B cell (primary cell): ENCODE measurements at regions of chr11 and their contacts with region 1.

Region 1: DNA sequence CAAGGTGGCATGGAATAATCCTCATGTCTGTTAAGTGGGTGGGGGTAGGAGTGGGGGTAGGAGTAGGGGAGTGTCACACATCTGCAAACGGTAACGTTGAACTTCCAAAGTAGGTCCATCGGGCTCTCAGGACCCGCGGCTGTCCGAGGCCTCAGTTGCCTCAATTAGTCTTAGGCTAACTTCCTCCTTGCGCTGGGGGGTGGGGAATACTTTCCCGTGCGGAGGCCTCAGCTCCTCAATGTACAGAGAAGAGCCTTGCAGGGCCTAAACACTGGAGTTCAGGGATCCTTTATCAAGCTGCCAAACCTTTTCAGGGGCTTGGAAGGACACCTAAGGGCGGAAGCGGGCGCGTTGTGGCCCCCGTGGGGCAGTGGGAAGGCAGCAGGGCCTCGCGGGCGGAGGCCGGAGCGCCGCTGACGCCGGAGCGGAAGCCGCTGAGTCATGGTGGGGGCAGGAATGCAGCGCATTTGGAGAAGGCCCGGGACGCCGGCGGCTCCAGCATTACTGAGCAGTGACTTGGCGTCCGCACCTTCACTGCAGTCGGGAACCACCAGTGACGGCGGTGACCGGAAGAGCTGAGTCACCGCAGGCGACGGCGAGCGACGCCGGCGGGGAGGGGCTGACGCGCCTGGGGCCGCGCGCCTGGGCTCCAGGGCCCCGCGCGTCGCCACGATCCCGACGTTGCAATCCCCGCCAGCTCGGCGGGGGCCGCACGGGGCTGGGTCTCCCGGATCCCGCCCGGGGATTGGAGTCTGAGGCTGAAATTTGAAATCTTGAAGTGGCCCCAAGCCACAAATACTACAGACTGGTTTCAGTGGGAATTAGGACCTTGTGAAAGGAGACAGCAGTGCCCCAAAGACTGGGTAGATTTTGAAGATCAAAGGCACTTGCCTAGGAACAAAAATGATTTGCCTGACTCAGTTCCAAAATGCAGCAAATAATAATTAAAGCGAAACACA is 20.2 kb upstream of the IPO7 start:
- DNase-seq: peak; percentile 83
- ATAC-seq: peak; percentile 95
- H3K4me3 ChIP-seq: peak overlapping the region; percentile 63 to 84 (median 74)
- H3K4me3 Mint-ChIP-seq: peak overlapping the region; percentile 89
- H3K27ac ChIP-seq: peak overlapping the region; percentile 69 to 73
- H3K27ac Mint-ChIP-seq: peak overlapping the region; percentile 87
- H3K4me1 ChIP-seq: peaks cover 0 to 9% of the 10 kb centered on the region in 2 donors
- H3K4me1 Mint-ChIP-seq: peaks cover 9% of the 10 kb centered on the region
- H3K27me3 ChIP-seq: no peaks in the 10 kb centered on the region
- H3K27me3 Mint-ChIP-seq: no peaks in the 10 kb centered on the region
- CTCF ChIP-seq: no peak

Region 2: DNA sequence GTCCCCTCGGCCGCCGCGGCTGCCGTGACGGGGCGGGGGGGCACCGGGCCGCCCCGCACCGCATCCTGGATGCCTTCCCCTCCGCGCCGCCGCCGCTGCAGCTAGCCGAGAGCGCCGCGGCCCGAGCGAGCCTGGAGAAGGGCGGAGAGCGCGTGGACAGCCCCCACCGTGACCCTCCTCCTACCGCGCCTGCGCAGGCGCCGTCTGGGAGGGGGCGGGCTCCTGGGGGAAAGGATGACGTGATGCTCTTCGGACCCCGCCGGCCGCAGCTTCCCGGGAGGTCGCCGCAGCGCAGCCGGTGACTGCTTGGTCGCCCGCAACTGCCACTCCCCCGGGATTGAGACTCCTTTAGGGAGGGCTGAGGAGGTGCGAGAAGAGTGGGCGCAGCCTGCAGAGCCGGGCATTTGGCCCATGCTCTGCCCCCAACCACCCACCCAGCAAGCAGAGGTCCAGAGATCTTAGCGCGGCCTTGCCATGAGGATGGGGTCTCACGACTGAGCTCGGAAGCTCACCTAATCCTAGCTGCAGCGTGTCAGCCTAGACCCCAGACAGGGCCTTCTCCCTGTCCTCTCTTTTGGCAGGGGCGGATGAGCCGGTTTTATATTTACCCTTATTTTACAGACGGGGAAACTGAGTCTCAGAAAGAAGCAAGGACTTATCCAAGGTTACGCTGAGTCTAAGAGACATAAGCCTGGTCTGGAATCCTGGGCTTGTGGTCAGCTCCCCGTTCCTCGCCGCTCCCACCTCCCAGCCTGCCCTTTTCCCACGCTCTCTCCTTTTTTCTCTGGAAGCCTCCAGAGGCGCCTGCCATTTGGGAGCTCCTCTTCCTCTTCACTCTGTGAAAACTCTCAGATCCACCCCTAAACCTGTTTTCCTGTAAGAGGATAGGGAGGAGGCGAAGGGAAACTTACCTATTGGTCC is 98.8 kb before region 1 on chr11 and contains the start of gene DENND5A:
- CTCF ChIA-PET with region 1: no interaction called
- POLR2A ChIA-PET with region 1: no interaction called
- intact Hi-C with region 1: loop called (anchors 1 kb)
- DNase-seq: peak; percentile 73
- ATAC-seq: peak; percentile 74
- H3K4me3 ChIP-seq: peak within 1 kb of the TSS; percentile 64 to 94 (median 91)
- H3K4me3 Mint-ChIP-seq: peak within 1 kb of the TSS; percentile 97
- H3K27ac ChIP-seq: peak within 1 kb of the TSS; percentile 62 to 84
- H3K27ac Mint-ChIP-seq: peak within 1 kb of the TSS; percentile 94
- H3K4me1 ChIP-seq: peaks cover 11 to 19% of the 10 kb centered on the region in 2 donors
- H3K4me1 Mint-ChIP-seq: peaks cover 34% of the 10 kb centered on the region
- H3K27me3 ChIP-seq: no peaks in the 10 kb centered on the region
- H3K27me3 Mint-ChIP-seq: no peaks in the 10 kb centered on the region
- CTCF ChIP-seq: no peak
- total RNA-seq, gene DENND5A: 41.3 and 41.6 TPM in 2 replicates